Heart left ventricle (tissue), 16 donors: ENCODE measurements at regions of chr4 and their contacts with region 1.

Region 1: GRCh38 chr4:172202480-172203076 is 389.4 kb downstream of the GALNTL6 start:
- DNase-seq: no peak
- ATAC-seq: no peak
- H3K4me3 ChIP-seq: no peak overlapping the region
- H3K27ac ChIP-seq: no peak overlapping the region
- H3K4me1 ChIP-seq: no peaks in the 10 kb centered on the region
- H3K27me3 ChIP-seq: no peaks in the 10 kb centered on the region
- CTCF ChIP-seq: peak in 9 of 12 donors; percentile 14 to 56 (median 29)
- POLR2A ChIP-seq: no peak

Region 2: DNA sequence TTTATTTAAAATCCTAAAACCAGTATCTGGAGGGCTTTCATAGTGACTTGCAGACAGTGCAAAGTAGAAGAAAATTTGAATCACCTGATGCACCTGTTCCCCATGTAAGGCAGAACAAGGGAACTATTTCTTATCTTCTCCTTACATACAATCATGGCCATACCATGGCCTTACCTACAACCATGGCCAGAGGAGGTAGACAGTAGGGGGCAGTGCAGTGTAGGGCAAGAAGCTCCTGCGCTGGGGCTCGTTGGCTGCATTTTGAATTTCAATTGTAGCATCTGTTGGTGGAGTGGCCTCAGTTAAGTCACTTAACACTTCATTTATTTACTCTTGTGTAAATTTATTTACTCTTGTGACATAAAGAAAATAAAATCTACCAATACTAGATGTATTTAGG is 356.3 kb before region 1 on chr4:
- intact Hi-C with region 1: loop called in 1 of 10 experiments (anchors 10 kb)
- DNase-seq: peak in 2 of 5 donors; percentile 7 to 25
- ATAC-seq: no peak
- H3K4me3 ChIP-seq: no peak overlapping the region
- H3K27ac ChIP-seq: no peak overlapping the region
- H3K4me1 ChIP-seq: no peaks in the 10 kb centered on the region
- H3K27me3 ChIP-seq: no peaks in the 10 kb centered on the region
- CTCF ChIP-seq: peak in 9 of 12 donors; percentile 13 to 41 (median 29)
- POLR2A ChIP-seq: no peak